B cell (primary cell): ENCODE measurements at regions of chr14 and their contacts with region 1.

Region 1: DNA sequence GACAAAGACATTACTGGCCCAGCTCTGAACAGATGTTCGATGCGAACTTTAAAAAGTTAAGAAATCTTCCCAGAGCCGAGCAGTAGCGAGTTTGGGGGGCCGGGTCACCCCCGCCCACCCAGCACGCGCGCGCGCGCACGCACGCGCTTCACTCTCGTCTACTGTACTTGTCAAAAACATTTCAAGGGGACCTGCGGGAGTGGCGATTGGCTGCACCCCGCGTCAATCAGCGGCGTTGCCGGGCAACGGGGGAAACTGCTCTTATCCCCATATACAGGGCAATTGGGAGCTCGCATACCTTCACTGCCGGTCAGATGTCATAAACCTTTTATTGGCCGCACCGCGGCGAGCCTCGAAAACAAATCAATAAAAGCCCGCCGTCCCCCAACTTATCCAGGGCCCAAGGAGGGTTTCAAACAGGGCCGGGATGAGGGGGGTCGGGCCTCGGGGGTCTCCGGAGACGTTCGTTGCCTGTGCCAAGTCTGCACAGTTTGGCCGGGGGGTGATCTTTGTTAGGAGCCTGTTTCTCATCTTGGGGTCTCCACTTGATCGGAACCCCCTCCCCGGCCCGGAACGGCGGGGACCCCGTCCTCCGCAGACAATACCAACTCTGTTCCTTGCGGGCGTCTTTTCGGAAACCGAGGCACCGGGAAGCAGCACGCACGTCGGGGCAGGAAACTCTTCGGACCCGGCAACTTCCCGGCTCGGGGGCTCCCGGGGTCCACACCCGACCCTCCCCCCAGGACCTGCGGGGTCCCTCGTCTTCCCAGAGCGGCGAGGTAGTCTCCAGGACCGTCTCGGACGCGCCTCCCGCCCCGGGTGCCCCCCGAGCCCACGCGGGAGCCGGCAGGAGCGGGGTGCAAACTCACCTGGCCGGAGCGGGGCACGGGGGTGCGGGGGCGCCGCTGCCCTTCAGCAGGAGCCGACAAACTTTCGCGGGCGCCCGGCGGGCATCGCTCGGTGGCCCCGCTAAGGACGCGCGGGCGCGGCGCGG is 734 bp downstream of the FOXN3 start:
- DNase-seq: peak; percentile 99
- ATAC-seq: peak; percentile 68
- H3K4me3 ChIP-seq: peak overlapping the region; percentile 75 to 94 (median 83)
- H3K4me3 Mint-ChIP-seq: peak overlapping the region; percentile 92
- H3K27ac ChIP-seq: peak overlapping the region; percentile 91 to 94
- H3K27ac Mint-ChIP-seq: peak overlapping the region; percentile 95
- H3K4me1 ChIP-seq: peaks cover 15 to 18% of the 10 kb centered on the region in 2 donors
- H3K4me1 Mint-ChIP-seq: peaks cover 41% of the 10 kb centered on the region
- H3K27me3 ChIP-seq: no peaks in the 10 kb centered on the region
- H3K27me3 Mint-ChIP-seq: no peaks in the 10 kb centered on the region
- CTCF ChIP-seq: no peak

Region 2: DNA sequence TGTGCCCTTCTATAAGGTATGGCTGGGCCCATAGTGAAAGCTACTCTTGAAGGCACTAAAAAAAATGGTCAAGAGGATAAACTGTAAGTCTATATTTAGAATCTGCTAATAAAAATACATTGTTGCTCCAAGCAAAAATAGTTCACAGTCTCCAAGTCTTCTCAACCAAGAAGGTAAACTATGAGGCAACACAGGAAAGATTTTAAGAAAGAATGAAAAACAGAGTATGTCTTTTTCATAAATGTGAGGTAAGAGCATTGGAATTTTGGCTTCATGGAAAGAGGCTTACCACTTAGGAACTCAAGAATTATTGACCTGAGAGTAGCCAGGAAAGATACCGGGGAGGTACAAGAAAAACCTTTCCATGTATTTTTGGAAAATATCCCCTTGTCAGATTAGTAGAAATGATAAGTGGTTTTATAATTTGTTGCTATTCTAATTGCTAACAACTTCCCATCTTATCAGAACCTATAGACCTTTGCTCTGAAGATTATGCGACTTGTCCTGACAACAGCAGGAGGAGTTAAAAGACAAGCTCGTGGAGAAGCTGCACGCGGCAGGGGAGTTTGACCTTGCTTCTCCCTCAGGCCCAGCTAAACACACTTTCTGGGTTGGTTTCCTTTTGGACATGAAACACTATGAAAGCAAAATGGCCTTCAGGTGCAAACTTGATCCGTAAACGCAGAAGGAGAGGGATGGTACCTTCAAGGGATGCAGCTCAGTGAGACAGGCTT is 237.3 kb before region 1 on chr14:
- CTCF ChIA-PET with region 1: interaction called, 18 read pairs
- POLR2A ChIA-PET with region 1: interaction called, 3 read pairs
- intact Hi-C with region 1: loop called (anchors 1 kb)
- DNase-seq: no peak
- ATAC-seq: no peak
- H3K4me3 ChIP-seq: no peak overlapping the region
- H3K4me3 Mint-ChIP-seq: no peak overlapping the region
- H3K27ac ChIP-seq: peak overlapping the region in 1 of 2 donors; percentile 39
- H3K27ac Mint-ChIP-seq: peak overlapping the region; percentile 33
- H3K4me1 ChIP-seq: peaks cover 7 to 11% of the 10 kb centered on the region in 2 donors
- H3K4me1 Mint-ChIP-seq: peaks cover 19% of the 10 kb centered on the region
- H3K27me3 ChIP-seq: no peaks in the 10 kb centered on the region
- H3K27me3 Mint-ChIP-seq: no peaks in the 10 kb centered on the region
- CTCF ChIP-seq: no peak

Region 3: DNA sequence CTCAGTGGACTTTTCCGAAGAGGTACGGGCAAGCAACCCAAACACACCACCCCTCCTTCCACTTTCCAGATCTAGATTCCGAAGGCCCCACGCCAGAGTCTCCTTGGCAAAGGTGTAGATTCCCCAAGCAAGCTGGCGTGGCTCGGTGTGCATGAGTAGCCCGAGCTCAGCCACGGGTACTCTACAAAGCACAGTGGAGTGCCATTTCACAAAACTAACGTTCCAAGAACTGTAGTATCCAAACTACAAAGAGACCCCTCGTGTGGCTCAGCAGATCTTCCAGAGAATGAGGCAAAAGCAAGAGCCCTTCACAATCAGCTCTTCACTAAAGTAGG is 71.4 kb before region 1 on chr14:
- CTCF ChIA-PET with region 1: no interaction called
- POLR2A ChIA-PET with region 1: no interaction called
- intact Hi-C with region 1: no loop called
- DNase-seq: no peak
- ATAC-seq: no peak
- H3K4me3 ChIP-seq: no peak overlapping the region
- H3K4me3 Mint-ChIP-seq: no peak overlapping the region
- H3K27ac ChIP-seq: no peak overlapping the region
- H3K27ac Mint-ChIP-seq: no peak overlapping the region
- H3K4me1 ChIP-seq: peaks cover 19% of the 10 kb centered on the region in 2 donors
- H3K4me1 Mint-ChIP-seq: peaks cover 43% of the 10 kb centered on the region
- H3K27me3 ChIP-seq: no peaks in the 10 kb centered on the region
- H3K27me3 Mint-ChIP-seq: no peaks in the 10 kb centered on the region
- CTCF ChIP-seq: no peak

Region 4: GRCh38 chr14:89359477-89360222 is 56.6 kb before region 1 on chr14:
- CTCF ChIA-PET with region 1: interaction called, 3 read pairs
- POLR2A ChIA-PET with region 1: interaction called, 12 read pairs
- intact Hi-C with region 1: no loop called
- DNase-seq: peak; percentile 32
- ATAC-seq: peak; percentile 41
- H3K4me3 ChIP-seq: no peak overlapping the region
- H3K4me3 Mint-ChIP-seq: peak overlapping the region; percentile 59
- H3K27ac ChIP-seq: peak overlapping the region; percentile 11 to 32
- H3K27ac Mint-ChIP-seq: peak overlapping the region; percentile 84
- H3K4me1 ChIP-seq: peaks cover 33 to 41% of the 10 kb centered on the region in 2 donors
- H3K4me1 Mint-ChIP-seq: peaks cover 56% of the 10 kb centered on the region
- H3K27me3 ChIP-seq: no peaks in the 10 kb centered on the region
- H3K27me3 Mint-ChIP-seq: no peaks in the 10 kb centered on the region
- CTCF ChIP-seq: no peak

Region 5: GRCh38 chr14:89445273-89445973 is 29.1 kb after region 1 on chr14:
- CTCF ChIA-PET with region 1: no interaction called
- POLR2A ChIA-PET with region 1: no interaction called
- intact Hi-C with region 1: loop called (anchors 1 kb)
- DNase-seq: peak; percentile 40
- ATAC-seq: peak; percentile 50
- H3K4me3 ChIP-seq: no peak overlapping the region
- H3K4me3 Mint-ChIP-seq: peak overlapping the region; percentile 45
- H3K27ac ChIP-seq: peak overlapping the region; percentile 71 to 89
- H3K27ac Mint-ChIP-seq: peak overlapping the region; percentile 75
- H3K4me1 ChIP-seq: peaks cover 61 to 70% of the 10 kb centered on the region in 2 donors
- H3K4me1 Mint-ChIP-seq: peaks cover 74% of the 10 kb centered on the region
- H3K27me3 ChIP-seq: no peaks in the 10 kb centered on the region
- H3K27me3 Mint-ChIP-seq: no peaks in the 10 kb centered on the region
- CTCF ChIP-seq: no peak

Region 6: DNA sequence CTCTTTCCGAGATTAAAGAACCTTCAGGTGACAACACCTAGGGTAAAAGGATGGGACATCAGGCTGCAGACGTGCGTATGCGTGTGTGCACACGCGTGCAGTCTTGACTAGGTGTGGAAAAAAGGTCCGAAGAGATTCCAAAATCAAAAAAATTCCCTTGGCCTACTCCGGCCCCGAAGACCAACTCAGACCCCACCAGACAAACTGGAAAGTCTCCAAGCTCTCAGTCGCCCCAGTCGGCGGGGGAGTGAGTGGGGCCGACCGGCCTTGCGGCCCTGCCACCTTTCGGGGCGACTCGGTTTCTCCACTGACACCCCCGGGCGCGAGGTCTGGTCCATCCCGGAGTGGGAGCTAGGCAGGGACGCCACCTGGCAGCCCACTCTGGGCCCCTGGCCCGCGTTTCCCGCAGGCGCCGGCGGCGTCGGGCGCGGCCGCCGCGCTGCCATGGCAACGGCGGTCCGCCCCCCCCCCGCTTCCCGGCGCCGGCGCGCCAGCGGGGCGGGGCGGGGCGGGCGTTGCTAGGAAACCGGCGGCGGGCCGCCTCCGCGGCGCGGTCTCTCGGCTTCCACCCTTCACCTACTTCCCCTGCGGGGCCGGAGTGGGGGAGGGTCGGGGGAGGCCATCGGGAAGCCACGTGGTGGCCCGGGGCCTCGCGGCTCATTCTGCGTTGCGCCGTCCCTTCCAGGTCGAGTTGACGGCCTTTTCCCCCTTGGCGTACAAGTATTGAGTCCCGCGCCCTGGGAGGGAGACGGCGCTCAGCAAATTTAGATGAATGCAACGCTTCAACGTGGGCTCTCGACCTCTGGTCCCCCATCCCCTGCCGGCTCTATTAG is 285.1 kb after region 1 on chr14:
- CTCF ChIA-PET with region 1: no interaction called
- POLR2A ChIA-PET with region 1: no interaction called
- intact Hi-C with region 1: loop called (anchors 1 kb)
- DNase-seq: peak; percentile 90
- ATAC-seq: peak; percentile 96
- H3K4me3 ChIP-seq: peak overlapping the region; percentile 4 to 80 (median 62)
- H3K4me3 Mint-ChIP-seq: peak overlapping the region; percentile 88
- H3K27ac ChIP-seq: peak overlapping the region; percentile 28 to 71
- H3K27ac Mint-ChIP-seq: peak overlapping the region; percentile 85
- H3K4me1 ChIP-seq: peaks cover 25% of the 10 kb centered on the region in 2 donors
- H3K4me1 Mint-ChIP-seq: peaks cover 25% of the 10 kb centered on the region
- H3K27me3 ChIP-seq: no peaks in the 10 kb centered on the region
- H3K27me3 Mint-ChIP-seq: no peaks in the 10 kb centered on the region
- CTCF ChIP-seq: no peak

Region 7: DNA sequence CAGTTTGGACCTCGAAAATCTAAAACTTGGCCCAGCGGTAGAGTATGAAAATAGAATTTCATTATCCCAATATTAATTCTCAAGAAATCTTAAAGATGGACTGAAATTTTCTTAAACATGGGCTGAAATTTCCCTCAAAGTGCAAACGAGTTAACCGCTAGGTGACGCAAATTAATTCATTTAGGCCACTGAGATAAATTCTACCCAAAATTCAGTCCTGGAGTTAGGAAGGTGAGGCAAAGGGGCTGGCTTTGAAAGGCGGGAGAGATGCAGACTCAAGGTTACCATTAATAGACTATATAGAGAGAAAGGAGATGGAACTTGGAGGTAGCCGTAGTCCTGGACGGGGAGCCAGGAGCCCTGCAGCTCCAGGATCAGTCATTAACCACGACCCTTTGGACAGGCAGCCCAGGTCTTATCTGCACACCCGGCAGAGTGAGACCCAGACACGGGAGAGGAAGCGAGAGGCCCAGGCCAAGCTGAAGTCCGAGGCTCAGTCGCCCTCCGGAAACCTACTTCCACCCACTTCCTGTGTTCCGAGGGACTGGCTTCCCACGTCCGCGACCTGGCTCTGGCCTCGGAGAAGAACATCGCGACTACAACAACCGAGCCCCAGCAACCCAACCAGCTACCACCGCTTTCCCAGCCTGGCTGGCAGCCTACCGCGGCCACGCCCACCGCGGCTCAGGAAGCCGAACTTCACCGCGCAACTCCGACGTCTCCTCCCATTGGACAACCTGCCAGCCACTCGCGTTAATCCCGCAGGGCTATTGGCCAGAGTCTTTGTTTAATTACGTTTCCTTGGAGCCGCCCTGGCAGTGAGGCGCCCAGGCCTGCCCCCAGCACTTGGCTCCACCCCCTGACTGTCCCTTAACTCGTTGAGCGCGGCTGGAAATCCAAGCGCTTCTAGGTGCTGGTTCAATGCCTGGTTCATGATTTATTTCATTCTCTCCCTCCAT is 538.0 kb after region 1 on chr14 and contains the start of gene EFCAB11:
- CTCF ChIA-PET with region 1: no interaction called
- POLR2A ChIA-PET with region 1: interaction called, 3 read pairs
- intact Hi-C with region 1: loop called (anchors 2 kb)
- DNase-seq: peak; percentile 97
- ATAC-seq: peak; percentile 81
- H3K4me3 ChIP-seq: peak within 1 kb of the TSS; percentile 72 to 95 (median 84)
- H3K4me3 Mint-ChIP-seq: peak within 1 kb of the TSS; percentile 99
- H3K27ac ChIP-seq: peak within 1 kb of the TSS; percentile 99
- H3K27ac Mint-ChIP-seq: peak within 1 kb of the TSS; percentile 100
- H3K4me1 ChIP-seq: peaks cover 16 to 22% of the 10 kb centered on the region in 2 donors
- H3K4me1 Mint-ChIP-seq: peaks cover 32% of the 10 kb centered on the region
- H3K27me3 ChIP-seq: no peaks in the 10 kb centered on the region
- H3K27me3 Mint-ChIP-seq: no peaks in the 10 kb centered on the region
- CTCF ChIP-seq: peak; percentile 16
- total RNA-seq, gene EFCAB11: 13.8 and 14.2 TPM in 2 replicates